ENCODE measurements at regions of chr6 and their contacts with region 1.

Region 1: DNA sequence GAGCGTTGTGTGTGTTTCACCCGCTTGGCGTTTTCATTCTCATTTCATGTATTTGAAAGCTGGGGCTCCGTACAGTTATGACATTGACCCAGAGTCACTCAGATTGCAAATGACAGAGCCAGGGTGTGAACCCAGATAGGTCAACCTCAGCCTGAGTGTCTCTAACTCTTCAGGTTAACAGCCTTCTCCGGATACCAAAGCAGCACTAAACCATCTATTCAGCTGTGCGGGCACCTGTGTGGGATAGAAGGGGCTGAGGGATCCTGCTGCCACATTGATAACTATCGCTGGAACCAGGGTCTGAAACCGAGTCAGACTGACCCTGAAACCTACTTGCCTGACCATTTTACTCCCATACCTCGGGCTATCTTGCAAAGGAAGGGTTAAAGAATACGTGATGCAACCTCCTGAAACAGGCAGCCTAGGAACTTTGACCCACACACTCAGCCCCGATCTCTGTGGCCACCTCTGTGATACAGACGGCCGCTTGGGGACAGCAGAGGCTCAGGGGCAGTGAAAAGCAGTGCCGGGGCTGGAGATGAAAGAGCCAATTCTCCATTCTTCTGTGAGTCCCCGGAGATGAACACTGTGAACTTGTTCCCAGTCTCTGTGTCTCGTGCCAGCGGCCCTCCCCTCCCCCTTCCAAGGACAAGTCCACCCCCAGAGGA is 233.5 kb upstream of the QKI start:
- DNase-seq: peak; percentile 69 to 88 (median 84)
- H3K4me3 ChIP-seq: no peak overlapping the region
- H3K27ac ChIP-seq: no peak overlapping the region
- H3K4me1 ChIP-seq: no peaks in the 10 kb centered on the region
- H3K27me3 ChIP-seq: no peaks in the 10 kb centered on the region
- CTCF ChIP-seq: peak; percentile 66 to 93 (median 88)
- POLR2A ChIP-seq: no peak

Region 2: GRCh38 chr6:162856885-162857284 is 324.1 kb before region 1 on chr6:
- intact Hi-C with region 1: loop called in 1 of 2 experiments (anchors 5 kb)
- DNase-seq: peak; percentile 62 to 80 (median 74)
- H3K4me3 ChIP-seq: peak overlapping the region in 2 of 4 donors; percentile 14 to 38
- H3K27ac ChIP-seq: peak overlapping the region in 3 of 5 donors; percentile 9 to 45 (median 27)
- H3K4me1 ChIP-seq: peaks cover 0 to 3% of the 10 kb centered on the region in 2 donors
- H3K27me3 ChIP-seq: no peaks in the 10 kb centered on the region
- CTCF ChIP-seq: peak; percentile 55 to 74 (median 68)
- POLR2A ChIP-seq: peak in 1 of 2 donors; percentile 46

Region 3: DNA sequence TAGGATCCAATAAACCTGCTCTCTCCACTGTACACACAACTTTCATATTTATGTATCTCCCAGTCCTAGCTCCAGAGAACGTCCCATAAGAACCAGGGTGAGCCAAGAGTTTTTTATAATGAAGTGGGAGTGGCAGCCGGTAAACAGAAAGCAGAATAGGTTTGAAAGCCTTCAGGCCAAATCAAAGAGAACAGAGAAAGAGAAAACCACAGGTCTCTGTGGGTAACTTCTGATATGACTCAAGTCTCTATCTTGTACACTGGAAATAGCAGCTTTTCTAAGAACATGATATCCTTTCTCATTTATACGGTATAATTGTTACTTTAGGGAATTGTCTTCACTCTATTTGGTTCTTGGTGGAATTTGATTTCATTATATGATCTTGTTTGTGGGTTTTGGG is 179.7 kb before region 1 on chr6:
- intact Hi-C with region 1: no loop called
- DNase-seq: no peak
- H3K4me3 ChIP-seq: no peak overlapping the region
- H3K27ac ChIP-seq: no peak overlapping the region
- H3K4me1 ChIP-seq: no peaks in the 10 kb centered on the region
- H3K27me3 ChIP-seq: no peaks in the 10 kb centered on the region
- CTCF ChIP-seq: no peak
- POLR2A ChIP-seq: no peak

Region 4: GRCh38 chr6:163413345-163414116 is 232.5 kb after region 1 on chr6:
- intact Hi-C with region 1: loop called (anchors 5 to 10 kb)
- DNase-seq: peak; percentile 86 to 93 (median 90)
- H3K4me3 ChIP-seq: peak overlapping the region; percentile 38 to 98 (median 73)
- H3K27ac ChIP-seq: peak overlapping the region; percentile 95 to 100 (median 98)
- H3K4me1 ChIP-seq: peaks cover under 1 to 29% of the 10 kb centered on the region in 2 donors
- H3K27me3 ChIP-seq: no peaks in the 10 kb centered on the region
- CTCF ChIP-seq: no peak
- POLR2A ChIP-seq: peak; percentile 57 to 83

Region 5: GRCh38 chr6:163956571-163957407 is 775.8 kb after region 1 on chr6:
- intact Hi-C with region 1: loop called (anchors 5 to 10 kb)
- DNase-seq: peak; percentile 79 to 94 (median 87)
- H3K4me3 ChIP-seq: no peak overlapping the region
- H3K27ac ChIP-seq: no peak overlapping the region
- H3K4me1 ChIP-seq: peaks cover 0 to 7% of the 10 kb centered on the region in 2 donors
- H3K27me3 ChIP-seq: no peaks in the 10 kb centered on the region
- CTCF ChIP-seq: peak; percentile 78 to 98 (median 95)
- POLR2A ChIP-seq: no peak